Activated naive CD4-positive, alpha-beta T cell treated with anti-CD3 and anti-CD28 coated beads for 36 hours (primary cell): ENCODE measurements at regions of chr7 and their contacts with region 1.

Region 1: GRCh38 chr7:116236020-116236630 is 25.8 kb downstream of the TES start:
- DNase-seq: peak; percentile 73
- H3K4me3 Mint-ChIP-seq: no peak overlapping the region
- H3K27ac Mint-ChIP-seq: no peak overlapping the region
- H3K4me1 Mint-ChIP-seq: peaks cover 69% of the 10 kb centered on the region
- H3K27me3 Mint-ChIP-seq: no peaks in the 10 kb centered on the region

Region 2: DNA sequence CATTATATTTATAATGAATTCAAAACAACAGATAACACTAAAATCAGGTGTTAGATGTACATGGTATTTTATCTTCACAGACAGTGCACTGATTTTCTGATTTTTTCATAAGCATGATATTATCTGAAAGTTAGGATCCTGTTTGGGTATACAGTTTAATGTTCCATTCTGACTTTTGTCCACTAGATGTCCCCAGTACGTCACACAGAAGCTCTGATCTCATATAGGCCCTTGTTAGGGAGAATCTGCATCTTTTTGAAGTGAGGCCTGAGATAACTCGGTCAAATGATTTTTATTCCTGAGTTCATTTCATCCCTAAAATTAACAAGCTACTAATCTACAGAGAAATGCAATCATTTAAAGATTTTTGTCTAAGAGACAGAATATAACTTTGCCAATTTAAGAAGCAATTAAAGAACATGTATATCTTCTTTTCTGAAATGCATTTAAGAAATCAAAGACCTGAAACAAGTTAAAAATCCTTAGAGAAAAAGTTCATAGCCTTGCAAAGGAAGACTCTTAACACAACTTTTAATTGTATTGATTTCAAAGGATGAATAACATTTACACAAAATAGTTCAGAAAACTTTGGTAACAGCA is 97.8 kb before region 1 on chr7:
- CTCF ChIA-PET with region 1: interaction called, 6 read pairs
- intact Hi-C with region 1: loop called (anchors 1 kb)
- DNase-seq: peak; percentile 34
- H3K4me3 Mint-ChIP-seq: no peak overlapping the region
- H3K27ac Mint-ChIP-seq: no peak overlapping the region
- H3K4me1 Mint-ChIP-seq: peaks cover 9% of the 10 kb centered on the region
- H3K27me3 Mint-ChIP-seq: peaks cover 2% of the 10 kb centered on the region

Region 3: GRCh38 chr7:116173051-116174028 is 62.8 kb before region 1 on chr7:
- CTCF ChIA-PET with region 1: interaction called, 195 read pairs
- intact Hi-C with region 1: no loop called
- DNase-seq: peak; percentile 37
- H3K4me3 Mint-ChIP-seq: no peak overlapping the region
- H3K27ac Mint-ChIP-seq: no peak overlapping the region
- H3K4me1 Mint-ChIP-seq: no peaks in the 10 kb centered on the region
- H3K27me3 Mint-ChIP-seq: peaks cover 7% of the 10 kb centered on the region

Region 4: DNA sequence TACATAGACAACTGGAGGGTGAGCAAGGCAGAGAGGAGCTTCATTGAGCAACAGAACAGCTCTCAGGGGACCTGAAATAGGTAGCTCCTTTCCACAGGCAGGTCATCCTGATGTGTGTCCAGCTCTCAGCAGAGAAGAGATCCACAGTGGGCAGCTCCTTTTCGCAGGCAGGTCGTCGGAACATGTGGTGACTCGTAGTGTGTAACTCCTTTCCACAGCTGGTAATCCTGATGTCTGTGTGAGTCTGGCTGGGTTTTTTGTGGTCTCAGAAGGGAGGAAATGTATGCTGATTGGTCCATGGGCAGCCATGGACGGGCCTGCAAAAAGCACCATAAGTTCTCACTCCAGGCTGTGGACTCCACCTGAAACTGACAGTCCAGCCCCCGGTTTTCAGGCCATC is 50.2 kb before region 1 on chr7:
- CTCF ChIA-PET with region 1: interaction called, 195 read pairs
- intact Hi-C with region 1: no loop called
- DNase-seq: no peak
- H3K4me3 Mint-ChIP-seq: no peak overlapping the region
- H3K27ac Mint-ChIP-seq: no peak overlapping the region
- H3K4me1 Mint-ChIP-seq: no peaks in the 10 kb centered on the region
- H3K27me3 Mint-ChIP-seq: no peaks in the 10 kb centered on the region

Region 5: GRCh38 chr7:116218051-116218645 is 18.0 kb before region 1 on chr7:
- CTCF ChIA-PET with region 1: interaction called, 20 read pairs
- intact Hi-C with region 1: no loop called
- DNase-seq: no peak
- H3K4me3 Mint-ChIP-seq: no peak overlapping the region
- H3K27ac Mint-ChIP-seq: no peak overlapping the region
- H3K4me1 Mint-ChIP-seq: peaks cover 77% of the 10 kb centered on the region
- H3K27me3 Mint-ChIP-seq: no peaks in the 10 kb centered on the region